BJ (cell line): ENCODE measurements at regions of chr6 and their contacts with region 1.

Region 1: DNA sequence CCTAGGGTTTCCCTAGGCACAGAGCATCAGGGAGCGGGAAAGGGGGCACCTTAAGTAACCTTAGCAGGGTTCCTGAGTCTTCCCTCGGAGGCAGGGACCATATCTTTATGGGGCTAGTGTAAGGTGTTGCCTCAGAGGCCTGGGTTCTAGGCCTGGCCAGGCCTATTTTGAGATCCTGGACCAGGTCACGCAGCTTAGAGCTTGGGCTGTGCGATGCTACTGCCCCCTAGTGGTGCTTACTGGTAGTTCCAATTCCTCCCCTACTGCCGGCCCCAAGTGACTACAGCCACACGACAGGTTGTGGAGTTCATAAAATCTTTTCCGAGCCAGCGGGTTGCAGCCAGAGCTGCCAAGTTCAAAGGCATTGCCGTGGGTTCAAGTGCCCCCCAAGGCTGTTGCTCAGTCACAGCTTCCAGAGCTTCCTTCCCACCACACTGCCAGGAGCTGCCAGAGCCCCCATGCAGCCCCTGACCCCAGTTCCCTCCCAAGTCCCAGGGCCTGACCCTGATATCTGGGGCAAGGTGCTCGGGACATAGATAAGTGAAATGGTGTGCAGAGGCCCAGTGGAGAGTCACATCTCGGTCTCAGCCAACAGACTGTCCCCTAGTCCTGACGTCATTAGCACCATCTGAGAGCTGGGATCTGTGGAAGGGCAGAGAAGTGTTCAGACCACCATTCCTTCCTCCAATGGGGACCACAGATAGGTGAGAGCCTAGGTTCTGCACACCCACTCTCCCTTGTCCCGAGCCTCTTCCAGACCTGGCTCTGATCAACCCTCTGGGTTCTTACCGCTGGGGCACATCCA is 3.3 kb downstream of the LRRC73 start:
- DNase-seq: no peak
- H3K4me3 ChIP-seq: no peak overlapping the region
- H3K27me3 ChIP-seq: no peaks in the 10 kb centered on the region
- CTCF ChIP-seq: peak; percentile 95

Region 2: GRCh38 chr6:43228951-43229802 is 277.7 kb before region 1 on chr6 and contains the start of gene DNPH1:
- CTCF ChIA-PET with region 1: interaction called, 10 read pairs
- POLR2A ChIA-PET with region 1: no interaction called
- DNase-seq: no peak
- H3K4me3 ChIP-seq: peak within 1 kb of the TSS; percentile 49
- H3K27me3 ChIP-seq: peaks cover 2% of the 10 kb centered on the region; the same call in 1 of the 2 replicates
- CTCF ChIP-seq: peak; percentile 47
- polyA plus RNA-seq, gene DNPH1: 48.6 and 63.9 TPM in 2 replicates

Region 3: GRCh38 chr6:43269273-43270007 is 237.4 kb before region 1 on chr6:
- CTCF ChIA-PET with region 1: interaction called, 41 read pairs
- POLR2A ChIA-PET with region 1: no interaction called
- DNase-seq: no peak
- H3K4me3 ChIP-seq: peak overlapping the region; percentile 19
- H3K27me3 ChIP-seq: peaks cover 36% of the 10 kb centered on the region
- CTCF ChIP-seq: no peak

Region 4: GRCh38 chr6:43369174-43370022 is 137.5 kb before region 1 on chr6 and contains the start of gene ZNF318:
- CTCF ChIA-PET with region 1: interaction called, 16 read pairs
- POLR2A ChIA-PET with region 1: no interaction called
- DNase-seq: peak; percentile 87
- H3K4me3 ChIP-seq: peak within 1 kb of the TSS; percentile 81
- H3K27me3 ChIP-seq: no peaks in the 10 kb centered on the region
- CTCF ChIP-seq: no peak
- polyA plus RNA-seq, gene ZNF318: 10.3 and 11.5 TPM in 2 replicates

Region 5: DNA sequence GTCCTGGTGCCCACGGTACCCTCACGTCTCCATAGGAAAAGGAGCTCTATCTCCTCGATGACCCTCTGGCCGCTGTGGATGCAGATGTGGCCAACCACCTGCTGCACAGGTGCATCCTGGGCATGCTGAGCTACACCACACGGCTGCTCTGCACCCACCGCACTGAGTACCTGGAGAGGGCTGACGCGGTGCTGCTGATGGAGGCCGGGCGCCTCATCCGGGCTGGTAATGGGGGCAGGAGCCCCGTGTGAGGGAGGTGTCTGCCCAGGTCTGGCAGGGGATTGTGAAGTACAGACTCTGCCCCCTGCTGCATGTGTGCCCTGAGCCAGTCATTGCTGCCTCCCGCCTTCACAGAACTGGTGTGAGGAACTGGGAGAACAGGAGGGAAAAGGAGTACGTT is 63.9 kb before region 1 on chr6:
- CTCF ChIA-PET with region 1: interaction called, 17 read pairs
- POLR2A ChIA-PET with region 1: interaction called, 3 read pairs
- DNase-seq: no peak
- H3K4me3 ChIP-seq: no peak overlapping the region
- H3K27me3 ChIP-seq: no peaks in the 10 kb centered on the region
- CTCF ChIP-seq: no peak

Region 6: GRCh38 chr6:43477235-43478007 is 29.4 kb before region 1 on chr6 and contains the start of gene TJAP1:
- CTCF ChIA-PET with region 1: interaction called, 6 read pairs
- POLR2A ChIA-PET with region 1: interaction called, 13 read pairs
- DNase-seq: no peak
- H3K4me3 ChIP-seq: peak within 1 kb of the TSS; percentile 66
- H3K27me3 ChIP-seq: no peaks in the 10 kb centered on the region
- CTCF ChIP-seq: no peak
- polyA plus RNA-seq, gene TJAP1: 17.5 and 29.0 TPM in 2 replicates

Region 7: DNA sequence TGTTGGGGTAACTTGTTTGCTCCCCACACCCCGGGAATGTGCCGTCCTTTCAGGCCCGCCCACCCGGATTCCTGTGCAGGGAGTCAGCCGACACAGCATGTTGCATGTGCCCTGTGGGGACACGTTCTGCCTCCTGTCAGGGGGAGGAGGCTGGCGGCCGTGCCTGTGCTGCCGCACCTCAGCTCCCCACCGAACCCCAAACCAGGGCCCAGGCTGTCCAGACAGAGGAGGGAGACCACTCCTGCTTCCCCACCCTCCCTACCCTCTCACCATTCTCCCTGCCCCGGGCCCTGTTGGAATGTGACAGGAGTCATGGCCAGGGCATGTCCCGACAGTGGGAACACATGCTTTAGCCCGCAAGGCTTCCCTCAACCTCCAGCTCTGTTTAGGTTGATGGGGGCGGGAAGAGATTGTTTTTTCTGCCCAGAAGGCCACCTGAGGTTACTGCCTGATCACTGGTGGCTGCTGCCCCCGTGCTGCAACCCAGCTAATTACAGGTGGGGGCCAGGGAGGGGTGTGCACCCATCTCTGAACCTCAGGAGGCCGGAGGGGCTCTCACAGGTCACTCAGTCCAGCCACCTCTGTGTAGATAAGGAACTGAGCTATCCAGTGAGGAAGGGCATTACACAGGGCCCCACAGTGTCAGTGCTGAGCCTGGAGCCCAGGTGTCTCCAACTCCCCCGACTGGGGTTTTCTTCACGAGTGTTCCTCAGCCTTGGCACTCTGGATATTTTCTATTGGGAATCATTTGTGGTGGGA is 10.3 kb before region 1 on chr6:
- CTCF ChIA-PET with region 1: interaction called, 136 read pairs
- POLR2A ChIA-PET with region 1: interaction called, 4 read pairs
- DNase-seq: no peak
- H3K4me3 ChIP-seq: no peak overlapping the region
- H3K27me3 ChIP-seq: no peaks in the 10 kb centered on the region
- CTCF ChIP-seq: peak; percentile 76